BJ (cell line): ENCODE measurements at regions of chr9 and their contacts with region 1.

Region 1: GRCh38 chr9:112295174-112295573 is 38.2 kb downstream of the PTBP3 start:
- DNase-seq: no peak
- H3K4me3 ChIP-seq: no peak overlapping the region
- H3K27me3 ChIP-seq: no peaks in the 10 kb centered on the region
- CTCF ChIP-seq: no peak

Region 2: GRCh38 chr9:112308588-112308987 is 13.4 kb after region 1 on chr9:
- CTCF ChIA-PET with region 1: no interaction called
- POLR2A ChIA-PET with region 1: no interaction called
- DNase-seq: no peak
- H3K4me3 ChIP-seq: no peak overlapping the region
- H3K27me3 ChIP-seq: no peaks in the 10 kb centered on the region
- CTCF ChIP-seq: no peak

Region 3: GRCh38 chr9:112341741-112342140 is 46.6 kb after region 1 on chr9:
- CTCF ChIA-PET with region 1: no interaction called
- POLR2A ChIA-PET with region 1: interaction called, 13 read pairs
- DNase-seq: no peak
- H3K4me3 ChIP-seq: no peak overlapping the region
- H3K27me3 ChIP-seq: no peaks in the 10 kb centered on the region
- CTCF ChIP-seq: no peak